ENCODE measurements at regions of chr11 and their contacts with region 1.

Region 1: DNA sequence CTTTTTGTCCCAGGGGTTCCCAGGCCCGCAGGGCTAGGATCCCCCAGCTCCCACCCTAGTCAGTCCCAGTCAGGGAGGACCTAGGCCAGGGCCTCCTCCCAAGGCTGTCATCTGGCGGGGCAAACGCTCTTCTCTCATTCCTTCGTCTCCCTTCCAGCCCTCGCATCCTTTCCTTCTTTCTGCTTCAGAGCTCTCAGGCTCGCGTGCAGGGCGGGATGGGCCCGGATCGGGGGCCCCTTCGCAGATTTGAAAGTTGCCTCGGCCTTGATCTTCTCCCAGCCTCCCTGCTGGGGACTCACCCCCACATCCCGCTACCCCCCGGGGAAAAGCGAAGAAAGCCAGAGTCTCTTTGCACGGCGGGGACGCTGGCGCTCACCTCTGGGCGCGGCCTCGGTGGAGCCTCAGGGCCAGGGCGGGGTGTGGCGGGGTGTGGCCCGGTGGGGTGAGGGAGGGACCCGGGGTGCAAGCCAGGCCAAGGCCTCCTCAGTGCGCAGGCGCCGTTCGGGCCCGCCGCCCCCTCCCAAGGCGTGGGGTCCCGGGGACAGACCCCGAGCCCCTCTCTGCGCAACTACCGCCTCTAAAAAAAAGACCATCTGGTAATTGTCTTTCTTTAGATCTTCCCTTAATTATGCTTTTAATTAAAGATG is 14.8 kb upstream of the PAX6 start:
- DNase-seq: no peak
- H3K4me3 ChIP-seq: no peak overlapping the region
- H3K4me3 Mint-ChIP-seq: peak overlapping the region in 4 of 8 donors; percentile 4 to 50 (median 26)
- H3K27ac ChIP-seq: no peak overlapping the region
- H3K27ac Mint-ChIP-seq: peak overlapping the region in 2 of 7 donors; percentile 52 to 59
- H3K4me1 ChIP-seq: no peaks in the 10 kb centered on the region
- H3K4me1 Mint-ChIP-seq: peaks cover 10 to 28% (median 16%) of the 10 kb centered on the region in 4 donors
- H3K27me3 ChIP-seq: peaks cover 76% of the 10 kb centered on the region
- H3K27me3 Mint-ChIP-seq: peaks cover 62 to 76% of the 10 kb centered on the region in 2 donors

Region 2: DNA sequence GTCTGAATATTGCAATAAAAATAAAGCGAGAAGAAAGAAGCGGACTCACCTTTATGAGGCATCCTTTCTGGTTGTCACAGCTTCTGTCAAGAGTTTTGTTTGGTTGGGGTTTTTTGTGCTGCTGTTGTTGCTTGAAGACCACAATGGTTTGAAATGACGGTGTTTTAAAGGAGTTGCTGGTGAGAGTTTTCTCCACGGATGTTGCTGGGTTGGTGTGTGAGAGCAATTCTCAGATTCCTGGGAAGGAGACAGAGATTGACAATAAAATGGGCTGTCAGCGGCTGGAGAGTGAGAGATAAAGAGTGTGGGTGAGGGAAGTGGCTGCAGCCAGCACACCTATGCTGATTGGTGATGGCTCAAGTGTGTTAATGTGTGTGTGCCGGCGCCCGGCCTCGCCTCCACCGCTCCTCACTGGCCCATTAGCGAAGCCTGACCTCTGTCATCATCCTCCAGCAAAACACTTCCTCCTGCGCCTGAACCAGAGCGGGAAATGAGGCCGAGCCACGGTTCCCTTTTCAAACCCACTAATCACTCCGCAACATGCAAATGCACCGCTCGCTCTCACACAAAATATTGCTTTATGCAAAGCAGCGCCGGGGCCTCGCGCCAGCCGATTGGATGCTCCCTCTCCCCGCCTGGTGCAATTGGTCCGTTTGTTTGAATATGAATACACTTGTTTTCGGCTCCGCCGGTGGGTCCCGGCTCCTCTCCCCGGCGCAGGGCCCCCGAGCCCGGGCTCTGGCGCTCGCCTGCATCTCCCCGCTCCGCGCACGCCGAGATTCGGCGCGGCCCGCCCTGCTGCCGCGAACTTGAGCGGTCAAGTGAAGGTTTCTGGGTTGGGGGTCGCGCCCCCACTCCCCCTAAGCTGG is 14.9 kb before region 1 on chr11 and contains the start of gene PAX6:
- CTCF ChIA-PET with region 1: no interaction called
- POLR2A ChIA-PET with region 1: no interaction called
- intact Hi-C with region 1: loop called (anchors 2 kb)
- DNase-seq: peak in 3 of 5 donors; percentile 41 to 63 (median 43)
- H3K4me3 ChIP-seq: peak within 1 kb of the TSS; percentile 3 to 41
- H3K4me3 Mint-ChIP-seq: peak within 1 kb of the TSS; percentile 78 to 93 (median 87)
- H3K27ac ChIP-seq: no peak within 1 kb of the TSS
- H3K27ac Mint-ChIP-seq: peak within 1 kb of the TSS in 2 of 7 donors; percentile 33 to 84
- H3K4me1 ChIP-seq: peaks cover 57% of the 10 kb centered on the region
- H3K4me1 Mint-ChIP-seq: peaks cover 28 to 74% (median 40%) of the 10 kb centered on the region in 4 donors
- H3K27me3 ChIP-seq: peaks cover 77% of the 10 kb centered on the region
- H3K27me3 Mint-ChIP-seq: peaks cover 65 to 66% of the 10 kb centered on the region in 2 donors
- total RNA-seq, gene PAX6: not detected

Region 3: DNA sequence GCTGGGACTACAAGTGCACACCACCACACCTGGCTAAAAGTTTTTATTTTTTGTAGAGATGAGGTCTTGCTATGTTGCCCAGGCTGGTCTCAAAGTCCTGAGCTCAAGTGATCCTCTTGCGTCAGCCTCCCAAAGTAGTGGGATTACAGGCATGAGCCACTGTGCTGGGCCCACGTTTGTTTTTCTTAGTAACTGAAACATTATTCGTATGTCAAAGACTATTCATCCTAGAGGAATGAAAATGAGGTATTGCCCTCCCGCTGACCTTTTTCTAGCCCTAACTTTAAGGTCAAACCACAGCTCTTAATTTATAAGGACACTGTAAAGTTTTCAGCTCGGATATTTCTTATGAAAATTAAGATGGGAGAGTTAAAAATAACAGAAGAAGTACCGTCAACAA is 18.4 kb after region 1 on chr11:
- CTCF ChIA-PET with region 1: no interaction called
- POLR2A ChIA-PET with region 1: no interaction called
- intact Hi-C with region 1: no loop called
- DNase-seq: no peak
- H3K4me3 ChIP-seq: no peak overlapping the region
- H3K4me3 Mint-ChIP-seq: no peak overlapping the region
- H3K27ac ChIP-seq: no peak overlapping the region
- H3K27ac Mint-ChIP-seq: no peak overlapping the region
- H3K4me1 ChIP-seq: no peaks in the 10 kb centered on the region
- H3K4me1 Mint-ChIP-seq: no peaks in the 10 kb centered on the region
- H3K27me3 ChIP-seq: no peaks in the 10 kb centered on the region
- H3K27me3 Mint-ChIP-seq: peaks cover 16 to 24% of the 10 kb centered on the region in 2 donors

Measured in CD4-positive, alpha-beta memory T cell (primary cell).